GM13976 (cell line): ENCODE measurements at regions of chr4 and their contacts with region 1.

Region 1: GRCh38 chr4:22678940-22679854 is 13.5 kb upstream of the GBA3 start:
- DNase-seq: no peak
- CTCF ChIP-seq: no peak

Region 2: GRCh38 chr4:21790438-21791029 is 888.7 kb before region 1 on chr4:
- in situ Hi-C with region 1: loop called (anchors 25 kb)
- DNase-seq: no peak
- CTCF ChIP-seq: no peak

Region 3: GRCh38 chr4:22398671-22399070 is 280.5 kb before region 1 on chr4:
- in situ Hi-C with region 1: no loop called
- DNase-seq: no peak
- CTCF ChIP-seq: no peak

Region 4: DNA sequence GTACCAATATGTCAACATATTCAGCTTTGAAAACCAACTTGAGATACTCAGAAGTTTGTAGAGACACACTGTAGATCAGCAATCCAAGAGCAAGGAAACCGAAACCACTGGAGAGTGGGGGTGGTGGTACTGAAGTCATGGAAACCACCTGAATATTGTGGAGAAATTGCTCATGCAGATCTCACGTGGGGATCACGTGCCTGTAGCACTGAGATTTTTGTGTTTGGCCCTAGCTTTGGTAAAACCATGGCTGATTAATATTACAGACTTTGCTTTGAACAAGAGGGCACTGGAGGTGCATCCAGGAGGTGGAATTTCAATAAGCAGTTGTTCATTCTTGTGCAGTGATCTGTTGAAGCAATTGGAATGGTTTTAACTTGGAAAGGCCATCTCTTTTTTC is 60.8 kb after region 1 on chr4:
- in situ Hi-C with region 1: no loop called
- DNase-seq: no peak
- CTCF ChIP-seq: no peak